ENCODE measurements at regions of chr22 and their contacts with region 1.

Region 1: GRCh38 chr22:50326959-50327710 is at the start of gene DENND6B:
- DNase-seq: peak; percentile 76 to 88 (median 78)
- H3K4me3 ChIP-seq: peak within 1 kb of the TSS in 3 of 4 donors; percentile 34 to 92 (median 75)
- H3K27ac ChIP-seq: peak within 1 kb of the TSS; percentile 31 to 97 (median 92)
- H3K4me1 ChIP-seq: peaks cover 8 to 17% of the 10 kb centered on the region in 2 donors
- H3K27me3 ChIP-seq: no peaks in the 10 kb centered on the region
- CTCF ChIP-seq: peak in 4 of 6 experiments; percentile 44 to 95 (median 75)
- POLR2A ChIP-seq: peak; percentile 36 to 71
- total RNA-seq, gene DENND6B: 1.8 to 16.9 (median 8.0) TPM

Region 2: DNA sequence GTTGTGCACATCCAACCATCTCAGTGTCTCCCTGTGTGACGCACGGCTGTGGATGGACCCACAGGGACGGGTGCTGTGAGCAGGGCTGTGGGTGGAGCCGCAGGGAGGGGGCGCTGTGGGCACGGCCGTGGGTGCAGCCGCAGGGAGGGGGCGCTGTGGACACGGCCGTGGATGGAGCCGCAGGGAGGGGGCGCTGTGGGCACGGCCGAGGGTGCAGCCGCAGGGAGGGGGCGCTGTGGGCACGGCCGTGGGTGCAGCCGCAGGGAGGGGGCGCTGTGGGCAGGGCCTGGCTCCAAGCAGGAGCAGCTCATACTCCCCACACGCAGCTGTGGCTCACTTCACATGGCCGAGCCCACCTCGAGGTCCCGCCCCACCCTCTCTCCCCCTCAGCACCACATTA is 51.0 kb before region 1 on chr22:
- intact Hi-C with region 1: loop called (anchors 5 kb)
- DNase-seq: peak; percentile 77 to 89 (median 84)
- H3K4me3 ChIP-seq: no peak overlapping the region
- H3K27ac ChIP-seq: peak overlapping the region in 2 of 5 donors; percentile 30 to 39
- H3K4me1 ChIP-seq: peaks cover 8 to 17% of the 10 kb centered on the region in 2 donors
- H3K27me3 ChIP-seq: no peaks in the 10 kb centered on the region
- CTCF ChIP-seq: peak; percentile 9 to 67 (median 32)
- POLR2A ChIP-seq: no peak

Region 3: DNA sequence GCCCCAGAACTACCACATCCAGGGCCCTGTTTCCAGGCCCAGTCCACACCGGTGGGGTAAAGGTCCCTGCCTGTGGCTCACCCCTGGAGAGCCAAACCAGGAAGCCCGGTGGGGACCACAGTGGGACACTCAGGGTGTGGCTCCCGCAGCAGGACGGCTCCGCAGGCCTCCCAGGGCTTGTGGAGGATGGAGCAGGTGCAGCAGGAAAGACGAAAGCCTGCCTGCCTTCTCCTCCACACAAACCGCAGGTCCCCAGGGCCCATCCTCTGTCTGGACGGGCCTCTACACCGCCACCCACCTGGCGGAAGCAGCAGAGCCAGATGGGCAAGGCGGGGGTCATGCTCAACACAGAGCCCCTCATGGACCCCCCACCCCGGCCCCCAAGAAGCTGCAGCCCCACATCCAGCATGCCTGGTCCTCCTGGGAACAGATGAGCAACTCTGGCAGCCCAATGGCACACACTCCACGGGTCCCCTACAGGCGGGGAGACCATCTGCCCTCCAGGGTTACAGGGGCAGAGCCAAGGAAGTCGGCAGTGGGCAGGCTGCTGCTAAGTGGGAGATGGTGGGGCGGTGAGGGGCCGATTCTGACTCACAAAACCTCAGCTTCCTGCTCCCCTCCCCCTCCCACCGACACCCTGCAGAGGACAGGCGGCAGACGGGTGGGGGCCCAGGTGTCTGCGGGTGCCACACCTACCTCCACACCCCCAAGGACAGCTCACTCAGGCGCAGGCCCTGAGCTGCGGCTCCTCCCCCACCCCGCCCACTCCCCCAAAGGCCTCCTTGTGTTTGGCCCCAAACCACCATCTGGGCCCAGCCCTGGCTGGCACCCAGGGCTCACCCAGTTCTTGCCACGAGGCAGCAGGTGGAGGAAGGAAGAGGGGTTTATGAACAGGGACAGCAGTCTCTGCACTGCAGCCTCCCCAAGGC is 142.5 kb after region 1 on chr22:
- intact Hi-C with region 1: no loop called
- DNase-seq: peak in 6 of 7 donors; percentile 38 to 79 (median 57)
- H3K4me3 ChIP-seq: no peak overlapping the region
- H3K27ac ChIP-seq: peak overlapping the region in 1 of 5 donors; percentile 78
- H3K4me1 ChIP-seq: peaks cover 30 to 50% of the 10 kb centered on the region in 2 donors
- H3K27me3 ChIP-seq: no peaks in the 10 kb centered on the region
- CTCF ChIP-seq: no peak
- POLR2A ChIP-seq: no peak

Measured in adrenal gland (tissue), 19 donors.